Naive thymus-derived CD8-positive, alpha-beta T cell (primary cell): ENCODE measurements at regions of chr5 and their contacts with region 1.

Region 1: GRCh38 chr5:144170276-144171024 is at the starts of genes KCTD16 and YIPF5:
- DNase-seq: peak; percentile 90 to 99 (median 97)
- ATAC-seq: peak; percentile 95 to 97
- H3K4me3 Mint-ChIP-seq: peak within 1 kb of the TSS; percentile 89 to 98 (median 92)
- H3K27ac Mint-ChIP-seq: peak within 1 kb of the TSS; percentile 90 to 99 (median 95)
- H3K4me1 Mint-ChIP-seq: peaks cover 16 to 48% (median 42%) of the 10 kb centered on the region in 4 donors
- H3K27me3 Mint-ChIP-seq: peaks cover 0 to 6% (median 1%) of the 10 kb centered on the region in 5 donors
- polyA plus RNA-seq, gene KCTD16: not detected
- polyA plus RNA-seq, gene YIPF5: 53.4 to 62.2 (median 55.5) TPM

Region 2: GRCh38 chr5:144191998-144192397 is 21.5 kb after region 1 on chr5:
- POLR2A ChIA-PET with region 1: interaction called, 44 read pairs
- DNase-seq: peak in 9 of 10 donors; percentile 21 to 86 (median 73)
- ATAC-seq: peak; percentile 38 to 65
- H3K4me3 Mint-ChIP-seq: no peak overlapping the region
- H3K27ac Mint-ChIP-seq: no peak overlapping the region
- H3K4me1 Mint-ChIP-seq: peaks cover 23 to 44% (median 34%) of the 10 kb centered on the region in 4 donors
- H3K27me3 Mint-ChIP-seq: no peaks in the 10 kb centered on the region

Region 3: DNA sequence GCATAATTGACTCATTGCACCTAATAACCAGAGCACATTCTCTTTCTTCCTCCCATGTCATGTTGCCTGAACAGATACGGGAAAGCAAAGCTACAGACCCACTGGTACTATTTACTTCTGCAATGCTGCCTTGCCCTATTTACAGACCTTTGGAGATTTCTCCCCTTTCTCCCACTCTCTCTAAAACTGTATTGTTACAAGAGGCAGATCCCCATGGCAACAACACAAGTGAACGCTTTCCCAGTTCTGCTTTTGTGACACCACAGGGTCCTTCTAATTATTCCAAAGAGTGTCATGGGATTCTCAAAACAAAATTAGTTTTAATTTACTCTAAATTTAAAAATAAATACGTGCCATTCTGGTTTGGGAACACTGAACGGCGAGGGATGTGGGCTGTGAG is 104.9 kb after region 1 on chr5:
- POLR2A ChIA-PET with region 1: no interaction called
- DNase-seq: no peak
- ATAC-seq: no peak
- H3K4me3 Mint-ChIP-seq: no peak overlapping the region
- H3K27ac Mint-ChIP-seq: no peak overlapping the region
- H3K4me1 Mint-ChIP-seq: no peaks in the 10 kb centered on the region
- H3K27me3 Mint-ChIP-seq: peaks cover 0 to 4% (median 2%) of the 10 kb centered on the region in 5 donors